Psoas muscle (tissue), 8 donors: ENCODE measurements at regions of chr11 and their contacts with region 1.

Region 1: DNA sequence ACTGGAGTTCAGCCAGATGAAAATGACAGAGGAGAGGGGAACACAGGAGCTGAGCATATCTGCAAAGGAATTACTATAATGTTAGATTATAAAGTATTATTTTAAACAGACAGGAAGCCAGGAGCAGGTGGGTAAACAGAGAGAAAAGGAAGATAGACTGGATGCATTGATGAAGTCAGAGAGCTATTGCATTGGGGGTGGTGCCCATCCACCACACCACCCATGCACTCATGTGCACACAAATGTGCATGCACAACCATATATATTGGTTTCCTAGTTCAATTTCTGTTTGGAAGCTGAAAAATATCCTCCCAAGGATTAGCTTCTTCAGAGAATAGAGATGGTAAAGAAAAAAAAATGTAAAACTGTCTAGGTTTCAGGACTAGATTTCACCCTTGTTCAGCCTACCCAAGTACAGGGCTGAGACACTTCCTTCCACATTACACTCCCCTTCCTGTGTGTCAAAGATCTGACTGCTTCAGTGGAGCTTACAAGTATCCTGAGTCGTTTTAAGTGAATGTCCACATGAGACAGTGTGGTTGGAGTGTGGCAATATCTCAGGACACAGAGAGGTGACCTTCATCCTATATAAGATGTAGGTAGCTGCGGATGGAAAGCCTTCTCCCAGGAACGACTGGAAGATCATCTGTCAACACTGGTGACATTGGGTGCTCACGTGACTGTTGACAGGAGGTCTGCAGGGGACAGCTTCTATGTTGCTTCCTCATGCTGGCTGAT is 12.2 kb upstream of the SMPD1 start:
- DNase-seq: no peak
- ATAC-seq: no peak
- H3K4me3 ChIP-seq: no peak overlapping the region
- H3K27ac ChIP-seq: no peak overlapping the region
- H3K4me1 ChIP-seq: no peaks in the 10 kb centered on the region
- H3K27me3 ChIP-seq: no peaks in the 10 kb centered on the region
- CTCF ChIP-seq: no peak

Region 2: GRCh38 chr11:6307876-6308275 is 70.2 kb before region 1 on chr11:
- intact Hi-C with region 1: no loop called
- DNase-seq: no peak
- ATAC-seq: no peak
- H3K4me3 ChIP-seq: no peak overlapping the region
- H3K27ac ChIP-seq: no peak overlapping the region
- H3K4me1 ChIP-seq: no peaks in the 10 kb centered on the region
- H3K27me3 ChIP-seq: no peaks in the 10 kb centered on the region
- CTCF ChIP-seq: no peak

Region 3: GRCh38 chr11:6443269-6444003 is 65.4 kb after region 1 on chr11:
- intact Hi-C with region 1: loop called (anchors 1 to 2 kb)
- DNase-seq: peak; percentile 54 to 66
- ATAC-seq: peak; percentile 79 to 92 (median 84)
- H3K4me3 ChIP-seq: no peak overlapping the region
- H3K27ac ChIP-seq: no peak overlapping the region
- H3K4me1 ChIP-seq: no peaks in the 10 kb centered on the region
- H3K27me3 ChIP-seq: no peaks in the 10 kb centered on the region
- CTCF ChIP-seq: peak; percentile 75